SK-N-SH (cell line): ENCODE measurements at regions of chr4 and their contacts with region 1.

Region 1: DNA sequence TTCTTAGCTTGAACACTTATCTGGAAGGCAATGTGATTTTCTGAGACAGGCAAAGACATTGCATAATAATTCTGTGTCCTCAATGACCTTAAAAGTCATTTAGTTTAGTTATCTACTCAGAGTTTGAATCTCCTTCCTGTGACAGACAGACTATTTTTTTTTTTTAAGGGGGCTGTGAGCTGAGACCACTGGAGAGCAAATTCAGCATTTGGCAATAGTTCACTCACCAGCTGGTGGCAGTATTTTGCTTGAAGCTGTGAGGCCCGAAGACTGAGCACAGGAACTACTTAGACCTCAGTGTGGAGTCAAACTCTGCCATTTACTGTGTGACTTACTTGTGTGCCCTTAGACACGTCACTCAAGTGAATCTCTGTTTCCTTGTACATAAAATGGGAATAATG is 22.9 kb upstream of the CPE start:
- DNase-seq: peak; percentile 47
- H3K4me3 ChIP-seq: no peak overlapping the region; a peak in 1 of 4 replicates
- H3K27ac ChIP-seq: no peak overlapping the region
- H3K4me1 ChIP-seq: no peaks in the 10 kb centered on the region
- H3K27me3 ChIP-seq: no peaks in the 10 kb centered on the region
- CTCF ChIP-seq: peak; percentile 56
- EP300 ChIP-seq: no peak
- RAD21 ChIP-seq: peak; percentile 81

Region 2: DNA sequence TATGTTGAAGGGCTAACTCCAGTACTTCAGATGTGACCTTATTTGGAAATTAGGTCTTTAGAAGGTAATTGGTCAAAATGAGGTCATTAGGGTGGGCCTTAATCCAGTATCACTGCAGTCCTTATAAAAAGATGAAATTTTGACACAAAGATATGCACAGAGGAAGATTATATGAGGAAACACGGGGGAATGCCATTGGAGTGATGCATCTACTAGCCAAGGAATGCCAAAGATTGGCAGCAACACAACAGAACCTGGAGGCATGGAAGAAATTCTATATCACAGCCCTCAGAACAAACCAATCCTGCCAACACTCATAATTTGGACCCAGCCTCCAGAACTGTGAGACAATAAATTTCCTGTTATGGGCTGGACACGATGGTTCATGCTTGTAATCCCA is 396.0 kb before region 1 on chr4:
- CTCF ChIA-PET with region 1: no interaction called
- POLR2A ChIA-PET with region 1: no interaction called
- DNase-seq: no peak
- H3K4me3 ChIP-seq: no peak overlapping the region
- H3K27ac ChIP-seq: no peak overlapping the region
- H3K4me1 ChIP-seq: peaks cover 0 to 5% of the 10 kb centered on the region in 2 experiments; a peak in 2 of 4 replicates
- H3K27me3 ChIP-seq: no peaks in the 10 kb centered on the region
- CTCF ChIP-seq: no peak
- EP300 ChIP-seq: no peak
- RAD21 ChIP-seq: no peak

Region 3: GRCh38 chr4:165343353-165344191 is 12.3 kb before region 1 on chr4:
- CTCF ChIA-PET with region 1: interaction called, 14 read pairs
- POLR2A ChIA-PET with region 1: no interaction called
- DNase-seq: no peak
- H3K4me3 ChIP-seq: no peak overlapping the region
- H3K27ac ChIP-seq: no peak overlapping the region
- H3K4me1 ChIP-seq: no peaks in the 10 kb centered on the region
- H3K27me3 ChIP-seq: no peaks in the 10 kb centered on the region
- CTCF ChIP-seq: peak; percentile 56
- EP300 ChIP-seq: no peak
- RAD21 ChIP-seq: peak; percentile 67

Region 4: DNA sequence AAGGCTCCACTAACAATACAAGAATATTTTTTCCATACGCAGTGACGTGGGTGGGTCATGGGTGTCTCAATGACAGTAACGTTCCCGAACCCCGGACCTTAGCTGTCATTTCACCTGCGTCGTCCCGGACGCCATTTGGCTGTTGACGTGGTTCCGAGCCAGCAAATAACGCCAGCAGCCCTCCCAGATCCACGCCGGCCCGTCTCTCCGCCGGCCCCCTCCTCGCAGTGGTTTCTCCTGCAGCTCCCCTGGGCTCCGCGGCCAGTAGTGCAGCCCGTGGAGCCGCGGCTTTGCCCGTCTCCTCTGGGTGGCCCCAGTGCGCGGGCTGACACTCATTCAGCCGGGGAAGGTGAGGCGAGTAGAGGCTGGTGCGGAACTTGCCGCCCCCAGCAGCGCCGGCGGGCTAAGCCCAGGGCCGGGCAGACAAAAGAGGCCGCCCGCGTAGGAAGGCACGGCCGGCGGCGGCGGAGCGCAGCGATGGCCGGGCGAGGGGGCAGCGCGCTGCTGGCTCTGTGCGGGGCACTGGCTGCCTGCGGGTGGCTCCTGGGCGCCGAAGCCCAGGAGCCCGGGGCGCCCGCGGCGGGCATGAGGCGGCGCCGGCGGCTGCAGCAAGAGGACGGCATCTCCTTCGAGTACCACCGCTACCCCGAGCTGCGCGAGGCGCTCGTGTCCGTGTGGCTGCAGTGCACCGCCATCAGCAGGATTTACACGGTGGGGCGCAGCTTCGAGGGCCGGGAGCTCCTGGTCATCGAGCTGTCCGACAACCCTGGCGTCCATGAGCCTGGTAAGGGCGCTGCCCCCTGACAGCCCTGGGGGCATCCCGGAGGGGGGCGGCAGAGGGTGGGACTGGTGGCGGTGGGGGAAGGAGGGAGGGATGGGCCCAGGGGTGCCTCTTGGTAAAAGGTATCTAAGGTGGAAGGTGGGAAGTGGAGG is 23.1 kb after region 1 on chr4 and contains the start of gene CPE:
- CTCF ChIA-PET with region 1: interaction called, 32 read pairs
- POLR2A ChIA-PET with region 1: no interaction called
- DNase-seq: peak; percentile 95
- H3K4me3 ChIP-seq: peak within 1 kb of the TSS; percentile 63 to 72
- H3K27ac ChIP-seq: peak within 1 kb of the TSS in 1 of 2 experiments; percentile 86; a peak in 2 of 4 replicates
- H3K4me1 ChIP-seq: peaks cover 0 to 14% of the 10 kb centered on the region in 2 experiments; a peak in 2 of 4 replicates
- H3K27me3 ChIP-seq: no peaks in the 10 kb centered on the region; the same call in 1 of the 2 replicates
- CTCF ChIP-seq: peak; percentile 38; the same call in 1 of the 2 replicates
- EP300 ChIP-seq: no peak
- RAD21 ChIP-seq: peak; percentile 51
- polyA plus RNA-seq, gene CPE: 18.2 and 25.9 TPM in 2 replicates

Region 5: GRCh38 chr4:165425629-165426028 is 69.7 kb after region 1 on chr4:
- CTCF ChIA-PET with region 1: interaction called, 14 read pairs
- POLR2A ChIA-PET with region 1: no interaction called
- DNase-seq: no peak
- H3K4me3 ChIP-seq: no peak overlapping the region
- H3K27ac ChIP-seq: no peak overlapping the region
- H3K4me1 ChIP-seq: no peaks in the 10 kb centered on the region
- H3K27me3 ChIP-seq: no peaks in the 10 kb centered on the region
- CTCF ChIP-seq: no peak
- EP300 ChIP-seq: no peak
- RAD21 ChIP-seq: no peak

Region 6: GRCh38 chr4:165464813-165465381 is 109.0 kb after region 1 on chr4:
- CTCF ChIA-PET with region 1: interaction called, 56 read pairs
- POLR2A ChIA-PET with region 1: no interaction called
- DNase-seq: peak; percentile 54
- H3K4me3 ChIP-seq: peak overlapping the region in 1 of 2 experiments; percentile 12; a peak in 1 of 4 replicates
- H3K27ac ChIP-seq: no peak overlapping the region
- H3K4me1 ChIP-seq: peaks cover 0 to 3% of the 10 kb centered on the region in 2 experiments; a peak in 1 of 4 replicates
- H3K27me3 ChIP-seq: no peaks in the 10 kb centered on the region; the same call in 1 of the 2 replicates
- CTCF ChIP-seq: peak; percentile 90
- EP300 ChIP-seq: no peak
- RAD21 ChIP-seq: peak; percentile 96